ENCODE measurements at regions of chr12 and their contacts with region 1.

Region 1: DNA sequence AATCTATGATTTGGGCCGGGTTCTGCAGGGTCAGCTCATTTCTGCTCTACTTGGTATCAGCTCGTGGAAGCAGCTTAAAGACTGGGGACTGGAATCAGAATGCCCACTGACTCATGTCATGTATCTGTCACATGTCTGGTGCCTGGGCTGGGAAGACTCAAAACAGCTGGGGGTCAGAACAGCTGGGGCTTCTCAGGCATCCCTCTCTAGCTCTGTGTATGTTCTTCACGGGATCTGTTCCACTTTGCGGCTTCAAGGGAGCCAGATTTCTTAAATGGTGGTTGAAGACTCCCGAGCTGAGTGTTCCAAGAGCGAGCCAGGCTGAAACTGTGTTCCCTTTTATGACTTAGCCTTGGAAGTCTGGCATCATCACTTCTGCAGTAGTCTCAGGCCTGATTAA is 11.9 kb downstream of the AEBP2 start:
- DNase-seq: no peak
- H3K4me3 Mint-ChIP-seq: no peak overlapping the region
- H3K27ac Mint-ChIP-seq: no peak overlapping the region
- H3K4me1 Mint-ChIP-seq: peaks cover 33% of the 10 kb centered on the region
- H3K27me3 Mint-ChIP-seq: no peaks in the 10 kb centered on the region
- CTCF ChIP-seq: no peak

Region 2: DNA sequence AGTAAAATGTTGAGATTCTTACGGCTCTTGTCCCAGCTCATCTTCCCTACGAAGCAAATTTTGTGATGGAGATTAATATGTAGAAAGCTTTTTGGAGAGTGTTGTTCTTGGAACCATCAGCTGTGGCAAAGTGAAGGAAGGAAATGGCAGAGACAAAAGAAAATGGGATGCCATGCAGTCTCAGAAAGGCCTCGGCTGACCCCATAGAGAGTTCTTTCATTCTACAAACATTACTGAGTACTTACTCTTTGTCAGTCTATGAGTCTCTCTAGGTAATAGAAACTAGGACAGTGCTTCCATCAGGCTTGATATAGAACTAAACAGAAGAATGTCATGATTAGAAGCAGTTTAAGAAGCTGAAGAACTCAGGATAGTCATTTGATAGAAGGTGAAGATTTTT is 187.5 kb before region 1 on chr12:
- CTCF ChIA-PET with region 1: no interaction called
- intact Hi-C with region 1: no loop called
- DNase-seq: no peak
- H3K4me3 Mint-ChIP-seq: no peak overlapping the region
- H3K27ac Mint-ChIP-seq: no peak overlapping the region
- H3K4me1 Mint-ChIP-seq: no peaks in the 10 kb centered on the region
- H3K27me3 Mint-ChIP-seq: no peaks in the 10 kb centered on the region
- CTCF ChIP-seq: no peak

Region 3: DNA sequence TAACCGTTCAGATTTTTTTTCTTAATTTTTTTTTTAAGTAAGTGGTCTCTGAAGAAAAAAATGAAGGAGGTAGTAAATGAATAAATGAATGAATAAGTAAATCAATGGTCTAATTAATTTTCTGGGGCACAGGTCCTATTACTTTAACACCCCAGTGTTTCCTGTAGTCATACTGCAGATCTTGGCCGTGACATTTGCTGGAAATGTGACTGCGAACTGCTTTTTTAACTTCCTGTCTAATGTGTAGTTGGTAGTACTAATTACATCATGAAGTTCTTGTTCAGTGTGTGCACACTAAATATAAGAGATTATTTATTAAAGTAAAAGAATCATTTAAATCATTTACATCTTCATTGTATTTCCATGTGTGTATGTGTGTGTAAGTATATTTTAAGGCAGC is 33.5 kb after region 1 on chr12:
- CTCF ChIA-PET with region 1: no interaction called
- intact Hi-C with region 1: loop called (anchors 5 kb)
- DNase-seq: no peak
- H3K4me3 Mint-ChIP-seq: no peak overlapping the region
- H3K27ac Mint-ChIP-seq: no peak overlapping the region
- H3K4me1 Mint-ChIP-seq: peaks cover 43% of the 10 kb centered on the region
- H3K27me3 Mint-ChIP-seq: no peaks in the 10 kb centered on the region
- CTCF ChIP-seq: no peak

Region 4: GRCh38 chr12:19826988-19827550 is 375.9 kb after region 1 on chr12:
- CTCF ChIA-PET with region 1: no interaction called
- intact Hi-C with region 1: no loop called
- DNase-seq: no peak
- H3K4me3 Mint-ChIP-seq: no peak overlapping the region
- H3K27ac Mint-ChIP-seq: no peak overlapping the region
- H3K4me1 Mint-ChIP-seq: no peaks in the 10 kb centered on the region
- H3K27me3 Mint-ChIP-seq: no peaks in the 10 kb centered on the region
- CTCF ChIP-seq: no peak

Measured in Calu3 (cell line).